Activated CD4-positive, alpha-beta T cell treated with anti-CD3 and anti-CD28 coated beads, Interleukin-2, amount 10 ng/mL, durations not matched to agents 24 days and 14 days (primary cell): ENCODE measurements at regions of chr5 and their contacts with region 1.

Region 1: GRCh38 chr5:96868603-96869371 is 7.5 kb upstream of the ERAP2 start:
- DNase-seq: peak; percentile 84
- H3K4me3 Mint-ChIP-seq: no peak overlapping the region
- H3K27ac Mint-ChIP-seq: peak overlapping the region; percentile 13
- H3K4me1 Mint-ChIP-seq: peaks cover 54% of the 10 kb centered on the region
- H3K27me3 Mint-ChIP-seq: no peaks in the 10 kb centered on the region

Region 2: DNA sequence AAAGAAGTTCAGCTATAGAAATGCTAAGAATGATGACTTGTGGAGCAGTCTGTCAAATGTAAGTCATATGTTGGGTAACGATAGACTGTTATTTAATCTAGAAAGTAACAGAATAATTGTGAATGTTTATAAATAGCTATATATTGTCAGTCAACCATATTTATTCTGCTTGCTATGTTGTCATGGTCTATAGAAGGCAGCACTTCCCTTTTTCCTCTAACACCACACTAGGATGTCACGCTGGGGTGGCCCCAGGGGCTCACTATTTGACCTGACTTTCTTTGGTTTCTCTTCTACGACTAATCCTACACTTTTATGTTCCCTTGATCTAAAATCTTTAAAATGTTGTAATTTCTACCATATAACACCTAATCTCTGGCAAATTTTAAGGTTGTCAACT is 28.0 kb after region 1 on chr5:
- intact Hi-C with region 1: loop called (anchors 1 kb)
- DNase-seq: peak; percentile 60
- H3K4me3 Mint-ChIP-seq: peak overlapping the region; percentile 84
- H3K27ac Mint-ChIP-seq: peak overlapping the region; percentile 94
- H3K4me1 Mint-ChIP-seq: peaks cover 51% of the 10 kb centered on the region
- H3K27me3 Mint-ChIP-seq: no peaks in the 10 kb centered on the region

Region 3: GRCh38 chr5:96997265-96997859 is 128.6 kb after region 1 on chr5:
- intact Hi-C with region 1: loop called (anchors 5 kb)
- DNase-seq: peak; percentile 67
- H3K4me3 Mint-ChIP-seq: no peak overlapping the region
- H3K27ac Mint-ChIP-seq: no peak overlapping the region
- H3K4me1 Mint-ChIP-seq: peaks cover 23% of the 10 kb centered on the region
- H3K27me3 Mint-ChIP-seq: no peaks in the 10 kb centered on the region

Region 4: GRCh38 chr5:97094579-97095317 is 226.0 kb after region 1 on chr5:
- intact Hi-C with region 1: loop called (anchors 2 kb)
- DNase-seq: peak; percentile 83
- H3K4me3 Mint-ChIP-seq: peak overlapping the region; percentile 56
- H3K27ac Mint-ChIP-seq: peak overlapping the region; percentile 83
- H3K4me1 Mint-ChIP-seq: peaks cover 21% of the 10 kb centered on the region
- H3K27me3 Mint-ChIP-seq: peaks cover 36% of the 10 kb centered on the region

Region 5: GRCh38 chr5:97162045-97162444 is 293.3 kb after region 1 on chr5:
- intact Hi-C with region 1: loop called (anchors 1 kb)
- DNase-seq: peak; percentile 87
- H3K4me3 Mint-ChIP-seq: no peak overlapping the region
- H3K27ac Mint-ChIP-seq: no peak overlapping the region
- H3K4me1 Mint-ChIP-seq: peaks cover 5% of the 10 kb centered on the region
- H3K27me3 Mint-ChIP-seq: no peaks in the 10 kb centered on the region